ENCODE measurements at regions of chr2 and their contacts with region 1.

Region 1: DNA sequence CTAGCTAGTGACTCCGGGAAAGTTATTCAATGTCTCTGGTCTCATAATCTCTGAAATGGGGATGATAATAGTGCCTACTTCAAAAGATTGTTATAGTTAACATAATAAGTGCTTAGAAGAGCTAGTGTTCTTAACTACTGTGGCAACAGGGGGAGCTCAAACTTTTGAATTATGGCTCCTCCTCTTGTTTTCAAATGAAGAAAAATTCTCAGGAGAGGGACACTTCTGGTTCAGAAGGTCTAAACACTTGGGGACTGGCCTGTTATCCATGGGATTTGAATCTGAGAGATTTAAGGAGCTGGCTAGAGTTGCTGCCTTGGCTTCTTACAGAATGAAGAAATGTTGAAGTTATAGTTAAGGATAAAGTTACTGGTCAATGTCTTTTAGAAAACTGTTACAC is 92.2 kb upstream of the ITGB6 start:
- DNase-seq: no peak
- ATAC-seq: peak in 1 of 2 experiments; percentile 11; a peak in 1 of 6 replicates
- H3K4me3 ChIP-seq: no peak overlapping the region
- H3K27ac ChIP-seq: peak overlapping the region in 1 of 2 experiments; percentile 74; a peak in 1 of 6 replicates
- H3K4me1 ChIP-seq: peaks cover 80% of the 10 kb centered on the region
- CTCF ChIP-seq: no peak; the same call in 2 of the 3 replicates
- EP300 ChIP-seq: no peak
- POLR2A ChIP-seq: no peak
- RAD21 ChIP-seq: peak; percentile 19 to 36; a peak in 2 of 5 replicates

Region 2: GRCh38 chr2:160269803-160270570 is 22.2 kb before region 1 on chr2:
- CTCF ChIA-PET with region 1: interaction called, 10 read pairs
- POLR2A ChIA-PET with region 1: interaction called, 4 read pairs
- DNase-seq: peak; percentile 83 to 92
- ATAC-seq: peak; percentile 91
- H3K4me3 ChIP-seq: peak overlapping the region; percentile 39
- H3K27ac ChIP-seq: peak overlapping the region; percentile 94 to 96
- H3K4me1 ChIP-seq: peaks cover 74% of the 10 kb centered on the region
- CTCF ChIP-seq: peak; percentile 43
- EP300 ChIP-seq: peak in 1 of 2 experiments; percentile 51; a peak in 1 of 5 replicates
- POLR2A ChIP-seq: no peak
- RAD21 ChIP-seq: peak; percentile 44 to 73

Region 3: GRCh38 chr2:160282063-160282580 is 10.1 kb before region 1 on chr2:
- CTCF ChIA-PET with region 1: interaction called, 10 read pairs
- POLR2A ChIA-PET with region 1: no interaction called
- DNase-seq: no peak
- ATAC-seq: no peak
- H3K4me3 ChIP-seq: no peak overlapping the region
- H3K27ac ChIP-seq: peak overlapping the region in 1 of 2 experiments; percentile 6; a peak in 2 of 6 replicates
- H3K4me1 ChIP-seq: peaks cover 30% of the 10 kb centered on the region
- CTCF ChIP-seq: no peak
- EP300 ChIP-seq: no peak
- POLR2A ChIP-seq: no peak
- RAD21 ChIP-seq: no peak

Region 4: GRCh38 chr2:160317181-160318099 is 25.2 kb after region 1 on chr2:
- CTCF ChIA-PET with region 1: no interaction called
- POLR2A ChIA-PET with region 1: no interaction called
- DNase-seq: no peak
- ATAC-seq: no peak
- H3K4me3 ChIP-seq: no peak overlapping the region
- H3K27ac ChIP-seq: no peak overlapping the region
- H3K4me1 ChIP-seq: peaks cover 46% of the 10 kb centered on the region
- CTCF ChIP-seq: no peak
- EP300 ChIP-seq: no peak
- POLR2A ChIP-seq: no peak
- RAD21 ChIP-seq: no peak